A549 (cell line): ENCODE measurements at regions of chr15 and their contacts with region 1.

Region 1: DNA sequence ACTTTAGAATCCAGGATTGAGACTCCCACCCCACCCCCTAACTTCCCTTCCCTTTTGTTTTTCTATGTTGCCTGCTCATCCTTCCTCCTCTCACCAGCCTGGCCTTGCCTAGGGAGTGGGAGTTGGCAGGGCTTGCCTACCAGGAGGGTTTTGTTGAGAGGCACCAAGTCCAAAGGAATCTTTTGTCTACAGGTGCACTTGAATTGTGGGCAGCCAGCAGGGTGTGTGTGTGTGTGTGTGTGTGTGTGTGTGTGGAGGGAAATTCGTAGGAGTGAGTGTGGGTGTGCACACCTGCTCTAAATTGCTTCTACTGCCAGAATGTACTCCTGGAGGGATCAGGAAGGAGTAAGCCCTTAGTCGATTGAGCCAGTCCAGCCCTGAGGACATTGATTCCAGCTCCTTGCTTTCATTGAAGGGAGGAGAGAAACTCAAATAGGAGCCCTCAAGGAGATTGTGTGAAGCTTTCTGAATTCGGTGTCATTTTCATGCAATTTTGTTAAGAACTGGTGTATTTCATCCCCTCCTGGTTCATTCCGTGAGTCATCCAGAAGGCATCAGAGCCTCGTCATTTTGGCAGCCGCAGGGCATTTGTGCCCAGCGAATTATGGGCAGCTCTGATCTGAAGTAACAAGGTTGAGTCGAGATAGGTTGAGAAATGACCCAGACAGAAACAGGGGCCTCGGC is 112.1 kb downstream of the SLCO3A1 start:
- DNase-seq: peak; percentile 77 to 80
- ATAC-seq: peak; percentile 87 to 89
- H3K4me3 ChIP-seq: peak overlapping the region; percentile 5; the same call in 1 of the 3 replicates
- H3K27ac ChIP-seq: peak overlapping the region; percentile 72 to 87
- H3K4me1 ChIP-seq: peaks cover 39% of the 10 kb centered on the region
- CTCF ChIP-seq: no peak
- EP300 ChIP-seq: no peak; a peak in 1 of 5 replicates
- POLR2A ChIP-seq: no peak
- RAD21 ChIP-seq: 0 out of 5 replicates have a peak, but pooled peaks of 1 of the 2 experiments have one; percentile 9

Region 2: GRCh38 chr15:91947683-91948608 is 17.7 kb before region 1 on chr15:
- CTCF ChIA-PET with region 1: interaction called, 22 read pairs
- POLR2A ChIA-PET with region 1: no interaction called
- DNase-seq: peak; percentile 55 to 67
- ATAC-seq: peak; percentile 73 to 81
- H3K4me3 ChIP-seq: no peak overlapping the region
- H3K27ac ChIP-seq: peak overlapping the region; percentile 6 to 70; a peak in 3 of 6 replicates
- H3K4me1 ChIP-seq: peaks cover 46% of the 10 kb centered on the region
- CTCF ChIP-seq: no peak
- EP300 ChIP-seq: no peak
- POLR2A ChIP-seq: no peak
- RAD21 ChIP-seq: 0 out of 5 replicates have a peak, but pooled peaks of 1 of the 2 experiments have one; percentile 7